ENCODE measurements at regions of chr6 and their contacts with region 1.

Region 1: GRCh38 chr6:53544470-53545308 is at the start of gene GCLC:
- DNase-seq: peak; percentile 92
- ATAC-seq: peak; percentile 76
- H3K4me3 ChIP-seq: peak within 1 kb of the TSS; percentile 91 to 99 (median 97)
- H3K27ac ChIP-seq: peak within 1 kb of the TSS; percentile 97
- H3K4me1 ChIP-seq: peaks cover 68% of the 10 kb centered on the region
- H3K27me3 ChIP-seq: no peaks in the 10 kb centered on the region; a peak in 1 of 5 replicates
- CTCF ChIP-seq: peak; percentile 76
- EP300 ChIP-seq: peak in 1 of 2 experiments; percentile 47; a peak in 2 of 4 replicates
- POLR2A ChIP-seq: peak; percentile 92 to 93
- RAD21 ChIP-seq: peak; percentile 99
- total RNA-seq, gene GCLC: 84.6 and 96.9 TPM in 2 replicates

Region 2: GRCh38 chr6:53492860-53493634 is 51.6 kb before region 1 on chr6:
- CTCF ChIA-PET with region 1: interaction called, 3 read pairs
- POLR2A ChIA-PET with region 1: interaction called, 8 read pairs
- in situ Hi-C with region 1: no loop called
- intact Hi-C with region 1: loop called (anchors 1 kb)
- DNase-seq: peak; percentile 59
- ATAC-seq: peak; percentile 89
- H3K4me3 ChIP-seq: peak overlapping the region; percentile 21 to 65 (median 36); a peak in 5 of 6 replicates
- H3K27ac ChIP-seq: no peak overlapping the region
- H3K4me1 ChIP-seq: peaks cover 17% of the 10 kb centered on the region
- H3K27me3 ChIP-seq: no peaks in the 10 kb centered on the region
- CTCF ChIP-seq: peak; percentile 81
- EP300 ChIP-seq: no peak
- POLR2A ChIP-seq: no peak
- RAD21 ChIP-seq: peak; percentile 63

Region 3: GRCh38 chr6:53529324-53530036 is 15.2 kb before region 1 on chr6:
- CTCF ChIA-PET with region 1: no interaction called
- POLR2A ChIA-PET with region 1: interaction called, 5 read pairs
- in situ Hi-C with region 1: no loop called
- intact Hi-C with region 1: loop called (anchors 2 kb)
- DNase-seq: no peak
- ATAC-seq: no peak
- H3K4me3 ChIP-seq: no peak overlapping the region
- H3K27ac ChIP-seq: no peak overlapping the region
- H3K4me1 ChIP-seq: peaks cover 39% of the 10 kb centered on the region
- H3K27me3 ChIP-seq: no peaks in the 10 kb centered on the region
- CTCF ChIP-seq: no peak
- EP300 ChIP-seq: no peak
- POLR2A ChIP-seq: no peak
- RAD21 ChIP-seq: no peak

Region 4: GRCh38 chr6:53634184-53634631 is 89.5 kb after region 1 on chr6:
- CTCF ChIA-PET with region 1: no interaction called
- POLR2A ChIA-PET with region 1: interaction called, 9 read pairs
- in situ Hi-C with region 1: no loop called
- intact Hi-C with region 1: loop called (anchors 5 kb)
- DNase-seq: peak; percentile 85
- ATAC-seq: peak; percentile 82
- H3K4me3 ChIP-seq: peak overlapping the region in 2 of 3 experiments; percentile 4 to 6; a peak in 1 of 6 replicates
- H3K27ac ChIP-seq: peak overlapping the region; percentile 59
- H3K4me1 ChIP-seq: peaks cover 44% of the 10 kb centered on the region
- H3K27me3 ChIP-seq: no peaks in the 10 kb centered on the region
- CTCF ChIP-seq: no peak
- EP300 ChIP-seq: peak in 1 of 2 experiments; percentile 73; a peak in 1 of 4 replicates
- POLR2A ChIP-seq: no peak
- RAD21 ChIP-seq: no peak

Region 5: GRCh38 chr6:53707108-53707897 is 162.6 kb after region 1 on chr6:
- CTCF ChIA-PET with region 1: no interaction called
- POLR2A ChIA-PET with region 1: no interaction called
- in situ Hi-C with region 1: no loop called
- intact Hi-C with region 1: no loop called
- DNase-seq: no peak
- ATAC-seq: no peak
- H3K4me3 ChIP-seq: no peak overlapping the region
- H3K27ac ChIP-seq: no peak overlapping the region
- H3K4me1 ChIP-seq: no peaks in the 10 kb centered on the region
- H3K27me3 ChIP-seq: no peaks in the 10 kb centered on the region; a peak in 2 of 5 replicates
- CTCF ChIP-seq: no peak
- EP300 ChIP-seq: no peak
- POLR2A ChIP-seq: no peak
- RAD21 ChIP-seq: no peak

Region 6: DNA sequence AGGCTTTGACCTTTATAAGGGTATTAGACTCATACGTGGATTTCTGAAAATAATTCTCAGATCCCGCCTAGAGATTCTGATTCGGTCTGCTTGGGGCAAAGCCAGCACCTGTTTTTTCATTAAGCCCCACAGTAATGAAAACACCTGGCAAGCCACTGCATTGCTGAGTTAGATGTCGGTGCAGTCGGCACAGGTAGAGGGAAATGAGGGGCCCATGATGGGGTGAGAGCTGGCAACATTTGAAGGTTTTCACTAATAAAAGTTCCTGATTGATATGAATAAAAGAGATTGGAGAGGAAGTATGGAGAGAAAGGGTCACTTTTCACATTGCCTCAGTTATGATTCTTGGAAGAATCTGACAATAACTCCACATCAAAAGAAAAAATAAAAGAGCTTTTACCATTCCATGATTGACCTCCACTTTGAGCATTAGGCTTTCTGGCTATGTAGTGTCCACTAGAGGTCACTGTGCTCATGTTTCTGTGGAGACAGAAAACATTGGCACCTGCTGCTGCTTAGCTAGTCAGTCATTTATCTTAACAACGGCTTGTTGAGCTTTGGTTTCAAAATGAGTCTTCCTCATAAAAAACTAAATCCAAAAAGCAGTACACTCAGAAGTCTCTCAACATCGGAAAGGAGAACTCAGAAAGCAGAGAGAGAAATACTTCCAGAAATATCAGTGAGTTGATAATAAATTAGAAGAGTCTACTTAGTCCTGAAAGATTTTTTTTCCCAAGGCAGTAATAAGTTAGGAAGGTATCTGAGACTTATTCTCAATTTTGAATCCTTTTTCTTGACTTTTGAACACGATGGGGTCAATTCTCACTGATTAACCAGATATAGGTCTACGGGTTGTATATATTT is 174.1 kb after region 1 on chr6:
- CTCF ChIA-PET with region 1: no interaction called
- POLR2A ChIA-PET with region 1: no interaction called
- in situ Hi-C with region 1: no loop called
- intact Hi-C with region 1: loop called (anchors 2 kb)
- DNase-seq: peak; percentile 72
- ATAC-seq: peak; percentile 89
- H3K4me3 ChIP-seq: no peak overlapping the region
- H3K27ac ChIP-seq: no peak overlapping the region
- H3K4me1 ChIP-seq: peaks cover 22% of the 10 kb centered on the region
- H3K27me3 ChIP-seq: no peaks in the 10 kb centered on the region; a peak in 1 of 5 replicates
- CTCF ChIP-seq: peak; percentile 88
- EP300 ChIP-seq: no peak
- POLR2A ChIP-seq: no peak
- RAD21 ChIP-seq: no peak